CD8-positive, alpha-beta T cell (primary cell): ENCODE measurements at regions of chr16 and their contacts with region 1.

Region 1: GRCh38 chr16:81314603-81315270 is at the start of gene GAN:
- DNase-seq: peak; percentile 86 to 97 (median 93)
- ATAC-seq: peak; percentile 96
- H3K4me3 ChIP-seq: peak within 1 kb of the TSS; percentile 77 to 87
- H3K4me3 Mint-ChIP-seq: peak within 1 kb of the TSS; percentile 95
- H3K27ac ChIP-seq: peak within 1 kb of the TSS; percentile 59 to 68
- H3K27ac Mint-ChIP-seq: peak within 1 kb of the TSS; percentile 93
- H3K4me1 ChIP-seq: peaks cover 18% of the 10 kb centered on the region
- H3K4me1 Mint-ChIP-seq: peaks cover 59% of the 10 kb centered on the region
- H3K27me3 ChIP-seq: no peaks in the 10 kb centered on the region
- H3K27me3 Mint-ChIP-seq: no peaks in the 10 kb centered on the region
- CTCF ChIP-seq: no peak
- total RNA-seq, gene GAN: 8.7 to 9.4 TPM

Region 2: GRCh38 chr16:81077076-81077940 is 237.4 kb before region 1 on chr16 and contains the start of gene C16orf46:
- CTCF ChIA-PET with region 1: no interaction called
- POLR2A ChIA-PET with region 1: no interaction called
- intact Hi-C with region 1: loop called (anchors 1 to 5 kb)
- DNase-seq: peak; percentile 95 to 100 (median 96)
- ATAC-seq: peak; percentile 69
- H3K4me3 ChIP-seq: peak within 1 kb of the TSS; percentile 80 to 92
- H3K4me3 Mint-ChIP-seq: no peak within 1 kb of the TSS
- H3K27ac ChIP-seq: peak within 1 kb of the TSS; percentile 93 to 97
- H3K27ac Mint-ChIP-seq: no peak within 1 kb of the TSS
- H3K4me1 ChIP-seq: peaks cover 11% of the 10 kb centered on the region
- H3K4me1 Mint-ChIP-seq: peaks cover 4% of the 10 kb centered on the region
- H3K27me3 ChIP-seq: no peaks in the 10 kb centered on the region
- H3K27me3 Mint-ChIP-seq: no peaks in the 10 kb centered on the region
- CTCF ChIP-seq: no peak
- total RNA-seq, gene C16orf46: 0.47 to 0.76 TPM

Region 3: GRCh38 chr16:81347425-81347824 is 32.7 kb after region 1 on chr16:
- CTCF ChIA-PET with region 1: no interaction called
- POLR2A ChIA-PET with region 1: no interaction called
- intact Hi-C with region 1: no loop called
- DNase-seq: no peak
- ATAC-seq: no peak
- H3K4me3 ChIP-seq: no peak overlapping the region
- H3K4me3 Mint-ChIP-seq: no peak overlapping the region
- H3K27ac ChIP-seq: no peak overlapping the region
- H3K27ac Mint-ChIP-seq: no peak overlapping the region
- H3K4me1 ChIP-seq: no peaks in the 10 kb centered on the region
- H3K4me1 Mint-ChIP-seq: no peaks in the 10 kb centered on the region
- H3K27me3 ChIP-seq: no peaks in the 10 kb centered on the region
- H3K27me3 Mint-ChIP-seq: no peaks in the 10 kb centered on the region
- CTCF ChIP-seq: no peak

Region 4: GRCh38 chr16:81360135-81360534 is 45.4 kb after region 1 on chr16:
- CTCF ChIA-PET with region 1: no interaction called
- POLR2A ChIA-PET with region 1: no interaction called
- intact Hi-C with region 1: loop called in 1 of 2 experiments (anchors 5 kb)
- DNase-seq: no peak
- ATAC-seq: no peak
- H3K4me3 ChIP-seq: no peak overlapping the region
- H3K4me3 Mint-ChIP-seq: no peak overlapping the region
- H3K27ac ChIP-seq: no peak overlapping the region
- H3K27ac Mint-ChIP-seq: no peak overlapping the region
- H3K4me1 ChIP-seq: no peaks in the 10 kb centered on the region
- H3K4me1 Mint-ChIP-seq: no peaks in the 10 kb centered on the region
- H3K27me3 ChIP-seq: no peaks in the 10 kb centered on the region
- H3K27me3 Mint-ChIP-seq: no peaks in the 10 kb centered on the region
- CTCF ChIP-seq: no peak

Region 5: GRCh38 chr16:81517629-81518428 is 203.1 kb after region 1 on chr16:
- CTCF ChIA-PET with region 1: no interaction called
- POLR2A ChIA-PET with region 1: no interaction called
- intact Hi-C with region 1: no loop called
- DNase-seq: no peak
- ATAC-seq: no peak
- H3K4me3 ChIP-seq: no peak overlapping the region
- H3K4me3 Mint-ChIP-seq: no peak overlapping the region
- H3K27ac ChIP-seq: no peak overlapping the region
- H3K27ac Mint-ChIP-seq: no peak overlapping the region
- H3K4me1 ChIP-seq: peaks cover 17% of the 10 kb centered on the region
- H3K4me1 Mint-ChIP-seq: peaks cover 46% of the 10 kb centered on the region
- H3K27me3 ChIP-seq: no peaks in the 10 kb centered on the region
- H3K27me3 Mint-ChIP-seq: no peaks in the 10 kb centered on the region
- CTCF ChIP-seq: no peak

Region 6: GRCh38 chr16:81745704-81746558 is 431.2 kb after region 1 on chr16:
- CTCF ChIA-PET with region 1: no interaction called
- POLR2A ChIA-PET with region 1: no interaction called
- intact Hi-C with region 1: loop called (anchors 1 to 2 kb)
- DNase-seq: peak; percentile 46 to 86 (median 77)
- ATAC-seq: peak; percentile 97
- H3K4me3 ChIP-seq: peak overlapping the region; percentile 48 to 60
- H3K4me3 Mint-ChIP-seq: peak overlapping the region; percentile 86
- H3K27ac ChIP-seq: peak overlapping the region; percentile 24 to 60
- H3K27ac Mint-ChIP-seq: peak overlapping the region; percentile 89
- H3K4me1 ChIP-seq: peaks cover 9% of the 10 kb centered on the region
- H3K4me1 Mint-ChIP-seq: peaks cover 11% of the 10 kb centered on the region
- H3K27me3 ChIP-seq: no peaks in the 10 kb centered on the region
- H3K27me3 Mint-ChIP-seq: no peaks in the 10 kb centered on the region
- CTCF ChIP-seq: no peak